ENCODE measurements at regions of chrX and their contacts with region 1.

Region 1: GRCh38 chrX:94329182-94329581 is 655.2 kb downstream of the FAM133A start:
- DNase-seq: no peak
- ATAC-seq: no peak
- H3K4me3 ChIP-seq: no peak overlapping the region
- H3K27ac ChIP-seq: no peak overlapping the region
- H3K4me1 ChIP-seq: no peaks in the 10 kb centered on the region
- H3K27me3 ChIP-seq: no peaks in the 10 kb centered on the region

Region 2: DNA sequence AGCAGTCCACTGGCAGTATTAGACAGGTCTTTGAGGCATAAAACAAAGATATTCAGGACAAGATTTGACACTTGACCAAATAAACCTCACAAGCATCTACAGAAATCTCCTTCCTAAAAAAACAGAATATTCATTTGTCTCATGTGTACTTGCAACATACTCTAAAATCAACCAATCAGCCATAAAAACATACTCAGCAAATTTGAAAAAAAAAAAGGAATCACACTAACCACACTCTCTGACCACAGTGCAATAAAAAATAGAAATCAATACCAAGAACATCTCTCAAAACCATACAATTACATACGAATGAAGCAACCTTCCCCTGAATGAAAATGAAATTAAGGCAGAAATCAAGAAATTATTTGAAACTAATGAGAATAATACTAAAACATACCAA is 63.9 kb before region 1 on chrX:
- intact Hi-C with region 1: loop called in 1 of 4 experiments (anchors 10 kb)
- DNase-seq: no peak
- ATAC-seq: no peak
- H3K4me3 ChIP-seq: no peak overlapping the region
- H3K27ac ChIP-seq: no peak overlapping the region
- H3K4me1 ChIP-seq: no peaks in the 10 kb centered on the region
- H3K27me3 ChIP-seq: no peaks in the 10 kb centered on the region

Measured in right cardiac atrium (tissue), 5 donors.